Activated B cell treated with CpG ODN at 0.5 μM for 24 hours (primary cell): ENCODE measurements at regions of chr6 and their contacts with region 1.

Region 1: GRCh38 chr6:28266962-28267694 is at the start of gene ZSCAN26:
- DNase-seq: peak; percentile 77
- ATAC-seq: peak; percentile 96
- H3K4me3 Mint-ChIP-seq: no peak within 1 kb of the TSS
- H3K27ac Mint-ChIP-seq: peak within 1 kb of the TSS; percentile 46
- H3K4me1 Mint-ChIP-seq: peaks cover 10% of the 10 kb centered on the region
- H3K27me3 Mint-ChIP-seq: no peaks in the 10 kb centered on the region
- CTCF ChIP-seq: no peak
- total RNA-seq, gene ZSCAN26: 16.0 and 17.8 TPM in 2 replicates

Region 2: GRCh38 chr6:28104392-28105244 is 162.5 kb before region 1 on chr6:
- CTCF ChIA-PET with region 1: interaction called, 5 read pairs
- POLR2A ChIA-PET with region 1: interaction called, 10 read pairs
- intact Hi-C with region 1: no loop called
- DNase-seq: peak; percentile 80
- ATAC-seq: peak; percentile 98
- H3K4me3 Mint-ChIP-seq: peak overlapping the region; percentile 94
- H3K27ac Mint-ChIP-seq: peak overlapping the region; percentile 95
- H3K4me1 Mint-ChIP-seq: peaks cover 10% of the 10 kb centered on the region
- H3K27me3 Mint-ChIP-seq: peaks cover 6% of the 10 kb centered on the region
- CTCF ChIP-seq: no peak

Region 3: GRCh38 chr6:28218271-28219248 is 48.6 kb before region 1 on chr6:
- CTCF ChIA-PET with region 1: no interaction called
- POLR2A ChIA-PET with region 1: interaction called, 14 read pairs
- intact Hi-C with region 1: loop called (anchors 5 kb)
- DNase-seq: peak; percentile 44
- ATAC-seq: peak; percentile 82
- H3K4me3 Mint-ChIP-seq: peak overlapping the region; percentile 89
- H3K27ac Mint-ChIP-seq: no peak overlapping the region
- H3K4me1 Mint-ChIP-seq: peaks cover 13% of the 10 kb centered on the region
- H3K27me3 Mint-ChIP-seq: peaks cover 54% of the 10 kb centered on the region
- CTCF ChIP-seq: no peak

Region 4: DNA sequence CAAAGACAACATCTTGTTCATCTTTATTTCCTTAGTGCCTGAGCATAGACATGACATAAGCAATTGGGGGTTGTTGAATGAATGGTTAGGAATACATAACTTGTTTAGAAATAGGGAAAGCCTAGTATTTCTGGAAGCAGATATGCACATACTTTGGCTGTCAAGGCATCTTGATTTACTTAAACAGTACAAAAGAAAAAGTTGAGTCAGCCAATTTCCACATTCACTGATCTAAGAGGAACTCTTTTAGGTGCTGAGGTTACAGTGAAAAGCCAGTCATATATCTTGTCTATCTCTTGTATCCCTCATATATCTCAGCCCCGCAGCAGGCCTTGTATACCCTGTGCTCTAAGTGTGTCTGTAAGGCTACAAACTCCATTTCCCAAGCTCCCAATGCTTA is 26.7 kb before region 1 on chr6:
- CTCF ChIA-PET with region 1: no interaction called
- POLR2A ChIA-PET with region 1: no interaction called
- intact Hi-C with region 1: no loop called
- DNase-seq: no peak
- ATAC-seq: no peak
- H3K4me3 Mint-ChIP-seq: no peak overlapping the region
- H3K27ac Mint-ChIP-seq: no peak overlapping the region
- H3K4me1 Mint-ChIP-seq: no peaks in the 10 kb centered on the region
- H3K27me3 Mint-ChIP-seq: no peaks in the 10 kb centered on the region
- CTCF ChIP-seq: no peak

Region 5: DNA sequence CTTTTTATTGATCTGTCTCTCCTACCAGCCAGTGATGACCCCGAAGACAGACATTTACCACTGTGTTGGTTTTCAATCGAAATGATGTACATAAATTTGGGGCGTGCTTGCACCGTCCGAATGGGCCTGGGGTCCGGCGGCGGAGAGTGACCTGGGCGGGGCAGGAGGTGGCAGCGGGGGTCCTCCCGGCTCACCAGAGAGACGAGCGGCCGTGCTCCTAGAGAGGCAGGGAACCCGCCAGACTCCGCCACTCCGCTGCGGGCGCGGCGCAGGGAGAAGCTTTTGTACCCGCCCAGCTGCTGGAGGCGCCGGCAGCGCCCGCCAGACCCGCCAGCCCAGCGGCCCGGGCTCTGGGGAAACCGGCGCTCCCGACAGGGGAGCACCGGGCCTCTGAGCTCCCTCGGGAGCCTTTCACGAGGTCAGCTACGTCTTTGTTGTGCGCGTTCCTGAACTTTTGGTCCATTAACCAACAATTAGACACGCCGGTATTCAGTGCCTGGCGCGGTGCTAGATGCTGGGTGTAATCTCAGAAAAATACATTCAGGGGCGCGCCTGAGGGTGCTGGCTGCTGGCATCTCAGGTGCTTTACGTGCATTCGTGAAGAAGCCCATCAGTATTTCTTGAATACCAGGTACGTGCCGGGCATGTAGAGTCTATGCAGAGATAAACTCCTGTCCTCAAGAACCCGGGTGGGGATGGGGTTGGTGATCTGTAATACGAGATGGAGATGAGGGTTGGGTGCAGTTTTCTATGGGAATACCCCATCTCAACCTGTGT is 14.3 kb after region 1 on chr6 and contains the start of gene PGBD1:
- CTCF ChIA-PET with region 1: interaction called, 3 read pairs
- POLR2A ChIA-PET with region 1: interaction called, 8 read pairs
- intact Hi-C with region 1: loop called (anchors 1 kb)
- DNase-seq: peak; percentile 52
- ATAC-seq: peak; percentile 86
- H3K4me3 Mint-ChIP-seq: peak within 1 kb of the TSS; percentile 84
- H3K27ac Mint-ChIP-seq: no peak within 1 kb of the TSS
- H3K4me1 Mint-ChIP-seq: peaks cover 12% of the 10 kb centered on the region
- H3K27me3 Mint-ChIP-seq: peaks cover 15% of the 10 kb centered on the region
- CTCF ChIP-seq: no peak
- total RNA-seq, gene PGBD1: 1.8 and 1.9 TPM in 2 replicates

Region 6: DNA sequence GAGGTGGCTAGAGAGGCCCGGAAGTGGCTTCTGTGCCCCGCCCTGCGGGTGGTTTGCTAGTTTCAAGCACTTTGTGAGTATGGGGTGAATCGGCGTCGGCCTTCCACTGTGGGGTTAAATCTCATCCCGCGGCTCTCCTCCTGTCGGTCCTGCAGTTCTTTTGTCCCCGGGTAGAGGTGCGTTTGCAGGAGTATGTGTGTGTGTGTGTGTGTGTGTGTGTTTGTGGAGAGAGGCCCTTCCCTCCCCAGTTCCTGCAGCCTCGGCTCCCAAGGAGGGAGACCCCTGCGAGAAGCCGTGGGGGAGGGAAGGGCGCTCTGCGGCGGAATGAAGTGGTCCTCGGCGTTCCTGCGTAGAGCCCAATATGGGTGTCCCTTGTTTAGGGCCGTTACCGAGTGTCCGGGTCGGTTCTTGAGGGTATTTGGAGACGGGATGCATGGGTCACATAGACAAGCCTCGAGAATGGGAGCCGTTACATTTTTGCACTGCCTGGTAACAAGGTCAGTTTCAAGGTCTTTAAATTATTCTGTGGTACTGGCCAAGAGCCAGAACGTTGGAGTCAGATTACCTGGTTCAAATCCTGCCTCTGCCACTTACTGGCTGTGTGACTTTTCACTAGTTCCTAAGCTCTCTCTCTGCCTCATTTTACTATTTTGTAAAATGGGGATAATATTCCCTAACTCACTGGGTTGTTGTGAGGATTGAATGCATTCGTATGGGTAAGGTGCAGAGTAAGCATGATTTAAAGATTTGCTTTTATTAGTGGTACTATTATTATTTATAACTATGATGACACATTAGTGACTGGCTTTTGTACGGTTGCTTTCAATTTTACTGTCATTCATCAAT is 83.0 kb after region 1 on chr6 and contains the start of gene ZKSCAN3:
- CTCF ChIA-PET with region 1: interaction called, 3 read pairs
- POLR2A ChIA-PET with region 1: interaction called, 5 read pairs
- intact Hi-C with region 1: loop called (anchors 1 kb)
- DNase-seq: peak; percentile 68
- ATAC-seq: peak; percentile 100
- H3K4me3 Mint-ChIP-seq: peak within 1 kb of the TSS; percentile 96
- H3K27ac Mint-ChIP-seq: peak within 1 kb of the TSS; percentile 94
- H3K4me1 Mint-ChIP-seq: peaks cover 28% of the 10 kb centered on the region
- H3K27me3 Mint-ChIP-seq: peaks cover 7% of the 10 kb centered on the region
- CTCF ChIP-seq: no peak
- total RNA-seq, gene ZKSCAN3: 5.6 and 6.3 TPM in 2 replicates

Region 7: DNA sequence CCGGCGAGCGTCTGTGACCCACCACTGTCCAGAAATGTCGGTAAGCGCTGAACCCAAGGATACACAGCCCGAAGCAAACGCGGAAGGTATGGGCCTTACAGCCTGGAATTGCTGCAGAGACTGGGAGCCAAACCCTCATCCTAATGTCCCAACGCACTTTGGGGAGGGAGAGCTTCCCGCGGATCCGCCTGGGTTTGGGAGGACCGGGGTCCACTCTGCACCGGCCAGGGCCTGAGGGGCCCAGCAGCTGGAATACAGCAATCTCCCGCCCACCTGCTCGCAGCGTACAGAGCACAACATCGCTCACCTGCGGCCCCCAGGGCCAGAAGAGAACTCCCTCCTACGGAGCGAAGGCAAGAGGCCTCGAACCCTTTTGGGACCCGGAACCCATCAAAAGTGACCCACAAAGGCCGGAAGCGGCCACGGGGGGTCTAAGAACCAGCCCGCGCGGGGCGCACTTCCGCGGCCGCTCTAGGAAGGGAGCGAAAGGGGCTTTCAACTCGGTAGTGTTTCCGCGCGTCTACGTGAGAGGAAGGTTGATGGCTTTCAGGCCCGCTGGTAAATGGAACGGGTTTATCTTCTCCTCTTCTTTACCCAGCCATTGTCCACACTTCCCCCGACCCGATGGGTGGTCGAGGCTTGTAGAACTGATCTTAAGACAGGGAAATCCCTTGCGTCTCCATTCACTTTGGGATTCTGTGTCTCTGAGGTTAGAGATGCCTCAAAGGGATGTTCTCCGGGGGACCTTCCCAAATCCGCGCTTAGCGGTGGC is 132.4 kb after region 1 on chr6 and contains the start of gene ZSCAN12:
- CTCF ChIA-PET with region 1: no interaction called
- POLR2A ChIA-PET with region 1: interaction called, 7 read pairs
- intact Hi-C with region 1: loop called (anchors 1 kb)
- DNase-seq: peak; percentile 79
- ATAC-seq: peak; percentile 89
- H3K4me3 Mint-ChIP-seq: peak within 1 kb of the TSS; percentile 97
- H3K27ac Mint-ChIP-seq: peak within 1 kb of the TSS; percentile 95
- H3K4me1 Mint-ChIP-seq: peaks cover 42% of the 10 kb centered on the region
- H3K27me3 Mint-ChIP-seq: peaks cover 34% of the 10 kb centered on the region
- CTCF ChIP-seq: no peak
- total RNA-seq, gene ZSCAN12: 12.8 and 13.0 TPM in 2 replicates